ENCODE measurements at regions of chr3 and their contacts with region 1.

Region 1: GRCh38 chr3:134373994-134374790 is at the start of gene AMOTL2:
- DNase-seq: peak; percentile 89
- ATAC-seq: peak; percentile 83 to 86
- total RNA-seq, gene AMOTL2: 47.9 to 59.3 TPM

Region 2: DNA sequence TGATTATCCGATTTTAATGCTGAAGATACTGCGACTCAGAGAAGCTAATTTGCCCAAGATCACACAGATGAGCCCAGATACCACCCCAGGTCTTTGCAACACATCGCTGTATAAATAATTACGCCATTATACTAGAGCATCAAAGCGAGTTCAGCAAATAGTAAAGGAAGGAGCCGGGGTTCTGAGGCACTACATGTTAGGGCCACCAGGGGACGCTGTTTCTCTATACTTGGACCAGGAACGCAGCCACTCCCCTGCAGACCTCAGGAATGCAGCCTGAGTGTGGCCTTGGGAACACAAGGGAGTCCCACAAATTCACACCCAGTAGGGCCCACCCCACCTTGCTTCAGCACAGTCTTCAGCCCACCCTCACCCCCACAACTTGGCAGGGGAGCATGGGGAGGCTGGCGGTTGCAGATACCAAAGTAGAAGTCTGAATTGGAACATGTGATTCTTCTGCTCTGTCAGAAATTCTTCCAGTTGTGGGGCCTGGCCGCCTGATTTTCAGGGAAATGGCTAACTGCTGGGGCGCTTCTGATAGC is 65.8 kb before region 1 on chr3:
- intact Hi-C with region 1: loop called (anchors 2 to 5 kb)
- DNase-seq: peak; percentile 82
- ATAC-seq: peak; percentile 57 to 65